ENCODE measurements at regions of chr22 and their contacts with region 1.

Region 1: GRCh38 chr22:40463017-40463631 is 92.7 kb downstream of the SGSM3 start:
- DNase-seq: peak; percentile 47
- H3K4me3 Mint-ChIP-seq: peak overlapping the region; percentile 93
- H3K27ac Mint-ChIP-seq: peak overlapping the region; percentile 98
- H3K4me1 Mint-ChIP-seq: peaks cover 51% of the 10 kb centered on the region
- H3K27me3 Mint-ChIP-seq: no peaks in the 10 kb centered on the region

Region 2: DNA sequence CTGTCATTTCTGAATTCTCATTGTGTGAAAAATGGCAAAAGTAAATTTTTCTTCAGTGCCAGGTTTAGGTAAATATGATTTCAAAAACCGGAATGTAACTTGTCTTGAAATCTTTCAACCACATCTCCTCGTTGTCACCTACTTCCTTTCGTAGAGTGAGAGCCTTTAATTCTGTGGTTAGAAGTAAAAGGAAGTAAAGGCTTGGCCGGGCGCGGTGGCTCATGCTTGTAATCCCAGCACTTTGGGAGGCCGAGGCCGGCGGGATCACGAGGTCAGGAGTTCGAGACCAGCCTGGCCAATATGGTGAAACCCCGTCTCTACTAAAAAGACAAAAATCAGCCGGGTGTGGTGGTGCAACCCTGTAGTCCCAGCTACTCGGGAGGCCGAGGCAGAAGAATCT is 63.0 kb before region 1 on chr22:
- intact Hi-C with region 1: loop called (anchors 2 kb)
- DNase-seq: peak; percentile 61
- H3K4me3 Mint-ChIP-seq: no peak overlapping the region
- H3K27ac Mint-ChIP-seq: peak overlapping the region; percentile 28
- H3K4me1 Mint-ChIP-seq: peaks cover 56% of the 10 kb centered on the region
- H3K27me3 Mint-ChIP-seq: no peaks in the 10 kb centered on the region

Region 3: GRCh38 chr22:40499187-40499753 is 36.1 kb after region 1 on chr22:
- intact Hi-C with region 1: loop called (anchors 5 kb)
- DNase-seq: no peak
- H3K4me3 Mint-ChIP-seq: no peak overlapping the region
- H3K27ac Mint-ChIP-seq: peak overlapping the region; percentile 51
- H3K4me1 Mint-ChIP-seq: peaks cover 23% of the 10 kb centered on the region
- H3K27me3 Mint-ChIP-seq: no peaks in the 10 kb centered on the region